Naive thymus-derived CD4-positive, alpha-beta T cell (primary cell): ENCODE measurements at regions of chr12 and their contacts with region 1.

Region 1: DNA sequence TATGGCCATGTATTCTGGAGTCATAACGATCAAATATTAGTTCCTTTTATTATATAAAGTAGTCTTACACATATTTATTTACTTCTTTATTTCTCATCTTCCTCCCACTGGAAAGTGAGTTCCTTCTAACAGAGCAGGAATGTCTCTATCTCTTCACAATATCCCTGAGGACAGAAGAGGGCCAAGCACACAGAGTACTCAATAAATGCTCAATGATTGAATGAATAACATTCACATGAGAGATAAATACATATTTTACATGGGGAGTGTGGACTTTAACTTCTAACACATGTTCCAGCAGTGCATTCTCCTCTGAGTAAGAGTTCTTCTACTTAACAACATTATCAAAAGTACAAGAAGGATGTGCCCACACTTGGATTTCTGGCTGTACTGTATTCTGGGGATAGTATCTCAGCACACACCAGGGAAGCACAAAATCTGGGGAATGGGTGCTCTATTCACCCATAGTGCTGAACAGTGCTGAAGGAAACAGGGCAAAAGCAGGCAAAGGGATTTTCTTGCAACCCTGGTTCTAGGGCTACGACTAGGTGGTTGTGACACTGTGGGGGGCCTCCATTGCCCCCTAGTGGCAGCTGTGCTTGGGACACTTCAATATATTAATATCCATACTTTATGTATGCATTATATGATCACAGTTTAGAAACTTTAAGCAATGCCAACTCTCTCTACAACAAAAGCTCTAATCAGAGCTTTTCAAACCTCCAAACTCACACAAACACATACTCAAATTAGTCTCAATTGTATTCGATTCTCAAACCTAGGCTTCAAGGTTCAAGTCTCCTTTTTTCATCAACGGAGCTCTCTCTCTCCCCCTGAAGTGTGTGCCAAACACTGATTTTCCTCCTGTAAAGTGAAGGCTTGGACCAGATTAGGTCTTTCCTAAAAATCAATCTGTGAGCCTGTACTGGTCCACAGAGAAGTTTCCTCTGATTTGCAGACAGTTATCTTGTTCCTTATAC is 115.5 kb downstream of the SLC2A13 start:
- DNase-seq: peak; percentile 4 to 51 (median 42)
- ATAC-seq: peak; percentile 89
- H3K4me3 ChIP-seq: no peak overlapping the region
- H3K4me3 Mint-ChIP-seq: no peak overlapping the region
- H3K27ac ChIP-seq: no peak overlapping the region
- H3K27ac Mint-ChIP-seq: no peak overlapping the region
- H3K4me1 ChIP-seq: no peaks in the 10 kb centered on the region
- H3K4me1 Mint-ChIP-seq: peaks cover 0 to 7% (median 6%) of the 10 kb centered on the region in 7 donors
- H3K27me3 ChIP-seq: no peaks in the 10 kb centered on the region
- H3K27me3 Mint-ChIP-seq: no peaks in the 10 kb centered on the region

Region 2: DNA sequence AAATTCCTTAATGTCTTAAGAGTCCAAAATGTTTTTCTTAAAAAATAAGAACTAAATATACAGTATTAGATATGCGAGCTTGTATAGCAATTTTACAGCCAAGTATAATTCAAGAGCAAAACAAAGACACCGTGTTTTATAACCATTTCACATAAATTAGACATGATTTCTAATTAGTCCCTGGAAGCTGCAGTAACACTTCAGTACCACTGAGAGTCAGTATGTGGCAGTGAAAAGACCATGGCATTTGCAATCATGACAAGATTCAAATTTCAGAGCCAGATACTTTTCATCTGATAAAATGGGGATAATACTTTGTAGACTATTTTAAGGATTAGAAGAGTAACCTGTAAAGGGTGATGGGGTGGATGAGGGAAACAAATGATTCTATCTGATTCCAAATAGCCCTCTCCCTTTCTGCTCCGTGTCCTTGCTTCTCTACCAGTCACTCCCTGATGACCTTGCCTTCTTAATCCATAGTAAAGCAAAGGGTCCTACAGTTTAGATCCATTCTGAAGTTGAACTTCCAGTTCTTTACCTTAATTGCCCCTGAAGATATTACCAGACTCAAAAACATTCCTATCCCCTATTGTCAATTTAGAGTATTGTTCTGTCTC is 225.4 kb before region 1 on chr12:
- CTCF ChIA-PET with region 1: no interaction called
- POLR2A ChIA-PET with region 1: no interaction called
- intact Hi-C with region 1: loop called in 1 of 2 experiments (anchors 1 kb)
- DNase-seq: peak in 4 of 9 donors; percentile 2 to 22 (median 8)
- ATAC-seq: peak; percentile 51
- H3K4me3 ChIP-seq: no peak overlapping the region
- H3K4me3 Mint-ChIP-seq: no peak overlapping the region
- H3K27ac ChIP-seq: no peak overlapping the region
- H3K27ac Mint-ChIP-seq: no peak overlapping the region
- H3K4me1 ChIP-seq: no peaks in the 10 kb centered on the region
- H3K4me1 Mint-ChIP-seq: no peaks in the 10 kb centered on the region
- H3K27me3 ChIP-seq: no peaks in the 10 kb centered on the region
- H3K27me3 Mint-ChIP-seq: no peaks in the 10 kb centered on the region

Region 3: DNA sequence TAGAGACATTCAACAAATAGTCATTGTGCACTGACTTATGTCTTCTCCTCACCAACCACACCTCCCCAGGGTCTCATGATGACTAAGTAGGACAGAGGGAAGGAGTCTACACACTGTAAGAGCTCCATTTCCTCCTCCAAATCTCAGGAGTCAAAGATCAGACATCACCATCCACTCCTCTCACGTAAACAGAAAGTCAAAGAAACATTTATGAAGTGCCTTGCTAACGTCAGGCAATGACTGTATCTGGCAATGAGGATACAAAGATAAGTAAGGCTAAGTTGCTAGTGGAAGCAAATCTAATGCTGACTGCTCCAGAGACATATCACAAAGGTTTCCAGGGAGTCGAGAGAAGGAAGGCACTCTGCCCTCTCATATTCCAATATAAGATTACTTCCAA is 26.6 kb after region 1 on chr12:
- CTCF ChIA-PET with region 1: no interaction called
- POLR2A ChIA-PET with region 1: no interaction called
- intact Hi-C with region 1: no loop called
- DNase-seq: no peak
- ATAC-seq: no peak
- H3K4me3 ChIP-seq: no peak overlapping the region
- H3K4me3 Mint-ChIP-seq: no peak overlapping the region
- H3K27ac ChIP-seq: no peak overlapping the region
- H3K27ac Mint-ChIP-seq: no peak overlapping the region
- H3K4me1 ChIP-seq: no peaks in the 10 kb centered on the region
- H3K4me1 Mint-ChIP-seq: peaks cover 0 to 6% (median 3%) of the 10 kb centered on the region in 7 donors
- H3K27me3 ChIP-seq: no peaks in the 10 kb centered on the region
- H3K27me3 Mint-ChIP-seq: no peaks in the 10 kb centered on the region